PC-3 (cell line): ENCODE measurements at regions of chr3 and their contacts with region 1.

Region 1: DNA sequence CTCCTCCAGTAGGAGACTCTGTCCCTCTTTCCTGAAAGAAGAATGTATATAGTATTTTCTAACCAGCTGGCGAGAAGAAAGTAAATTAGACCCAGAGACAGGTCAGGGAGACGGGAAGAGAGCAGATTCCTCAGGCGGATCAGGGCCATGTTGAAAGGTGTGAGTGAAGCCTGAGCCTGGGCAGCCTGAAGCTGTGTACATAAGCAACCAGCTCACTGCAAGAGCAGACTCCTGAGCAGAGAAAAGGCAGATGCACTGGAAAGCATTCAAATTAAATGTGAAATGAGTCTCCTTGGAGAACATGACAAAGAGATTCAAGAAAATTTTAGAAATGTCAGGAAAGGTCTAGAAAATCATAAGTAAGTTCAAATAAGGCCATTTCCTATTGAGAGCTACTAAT is 165.8 kb downstream of the GOLIM4 start:
- DNase-seq: no peak
- ATAC-seq: peak; percentile 44; the same call in 1 of the 2 replicates
- H3K4me3 ChIP-seq: no peak overlapping the region
- H3K27ac ChIP-seq: no peak overlapping the region
- H3K4me1 ChIP-seq: no peaks in the 10 kb centered on the region
- H3K27me3 ChIP-seq: peaks cover 16% of the 10 kb centered on the region
- CTCF ChIP-seq: no peak

Region 2: DNA sequence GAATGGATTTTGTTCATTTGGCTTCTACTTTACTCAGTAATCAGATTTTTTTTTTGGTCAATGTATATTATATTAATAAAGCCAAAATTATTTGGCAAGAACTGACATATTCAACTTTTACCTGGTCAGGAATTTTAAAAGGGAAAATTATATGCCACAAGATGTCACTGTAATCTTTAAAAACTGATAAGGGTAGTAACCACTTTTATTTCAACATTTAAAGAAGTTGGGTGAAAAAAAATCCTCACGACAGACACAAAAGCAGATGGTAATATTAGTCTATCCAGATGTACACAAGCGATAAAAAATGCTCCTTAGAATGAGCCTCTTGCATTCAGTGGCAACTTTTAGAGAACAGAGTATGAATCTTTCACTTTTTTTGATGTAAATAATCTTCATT is 92.5 kb before region 1 on chr3:
- CTCF ChIA-PET with region 1: no interaction called
- POLR2A ChIA-PET with region 1: no interaction called
- intact Hi-C with region 1: loop called (anchors 5 kb)
- DNase-seq: peak; percentile 52
- ATAC-seq: peak; percentile 18
- H3K4me3 ChIP-seq: no peak overlapping the region
- H3K27ac ChIP-seq: no peak overlapping the region
- H3K4me1 ChIP-seq: no peaks in the 10 kb centered on the region
- H3K27me3 ChIP-seq: no peaks in the 10 kb centered on the region
- CTCF ChIP-seq: peak; percentile 67

Region 3: DNA sequence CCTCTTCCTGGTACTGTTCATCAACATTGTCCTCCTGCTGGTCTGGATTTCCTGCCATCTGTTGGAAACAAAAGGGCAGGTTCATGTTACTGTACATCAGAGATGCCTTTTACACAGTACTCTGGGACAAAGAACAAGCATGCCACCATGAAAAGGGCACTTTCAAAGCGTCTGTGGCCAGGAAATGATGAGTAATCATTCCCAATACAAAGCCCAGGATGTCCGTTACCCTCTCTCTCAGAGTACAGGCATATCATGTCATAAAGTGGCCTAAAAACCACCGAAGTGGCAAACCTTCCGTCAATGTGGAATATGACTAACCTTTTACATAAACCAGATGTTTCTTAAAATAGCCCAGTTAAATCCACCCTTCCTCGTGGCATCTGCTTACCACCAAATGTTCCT is 94.6 kb after region 1 on chr3:
- CTCF ChIA-PET with region 1: no interaction called
- POLR2A ChIA-PET with region 1: no interaction called
- intact Hi-C with region 1: loop called (anchors 5 kb)
- DNase-seq: peak; percentile 82
- ATAC-seq: peak; percentile 98
- H3K4me3 ChIP-seq: no peak overlapping the region
- H3K27ac ChIP-seq: peak overlapping the region; percentile 83
- H3K4me1 ChIP-seq: peaks cover 16% of the 10 kb centered on the region
- H3K27me3 ChIP-seq: no peaks in the 10 kb centered on the region
- CTCF ChIP-seq: no peak

Region 4: GRCh38 chr3:168165390-168166269 is 235.7 kb after region 1 on chr3:
- CTCF ChIA-PET with region 1: no interaction called
- POLR2A ChIA-PET with region 1: no interaction called
- intact Hi-C with region 1: loop called (anchors 5 kb)
- DNase-seq: peak; percentile 85
- ATAC-seq: peak; percentile 74
- H3K4me3 ChIP-seq: no peak overlapping the region
- H3K27ac ChIP-seq: no peak overlapping the region
- H3K4me1 ChIP-seq: no peaks in the 10 kb centered on the region; the same call in 1 of the 2 replicates
- H3K27me3 ChIP-seq: no peaks in the 10 kb centered on the region
- CTCF ChIP-seq: peak; percentile 91

Region 5: DNA sequence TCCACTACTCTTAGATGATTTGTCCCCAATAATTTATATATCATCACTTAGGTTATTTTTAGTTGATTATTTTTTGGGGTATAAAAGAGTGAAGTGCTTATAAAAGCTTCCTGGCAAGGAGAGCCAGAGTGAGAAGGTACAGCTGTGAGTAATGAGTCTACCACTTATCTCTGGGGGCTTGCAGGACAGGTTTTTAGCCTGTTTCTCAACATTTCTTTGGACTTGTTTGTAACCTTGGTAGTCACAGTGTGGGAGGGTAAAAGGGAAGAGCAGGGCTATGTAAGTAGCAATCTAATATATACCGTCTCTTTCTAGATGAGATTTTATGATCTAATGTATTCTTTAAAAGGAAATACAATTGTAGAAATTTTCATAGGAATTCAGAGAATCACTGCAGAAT is 487.0 kb after region 1 on chr3:
- CTCF ChIA-PET with region 1: no interaction called
- POLR2A ChIA-PET with region 1: no interaction called
- intact Hi-C with region 1: no loop called
- DNase-seq: peak; percentile 95
- ATAC-seq: peak; percentile 84
- H3K4me3 ChIP-seq: peak overlapping the region; percentile 24; the same call in 1 of the 2 replicates
- H3K27ac ChIP-seq: 0 out of 2 replicates have a peak overlapping the region, but pooled peaks have one; percentile 10
- H3K4me1 ChIP-seq: peaks cover 46% of the 10 kb centered on the region
- H3K27me3 ChIP-seq: no peaks in the 10 kb centered on the region
- CTCF ChIP-seq: no peak